ENCODE measurements at regions of chr6 and their contacts with region 1.

Region 1: DNA sequence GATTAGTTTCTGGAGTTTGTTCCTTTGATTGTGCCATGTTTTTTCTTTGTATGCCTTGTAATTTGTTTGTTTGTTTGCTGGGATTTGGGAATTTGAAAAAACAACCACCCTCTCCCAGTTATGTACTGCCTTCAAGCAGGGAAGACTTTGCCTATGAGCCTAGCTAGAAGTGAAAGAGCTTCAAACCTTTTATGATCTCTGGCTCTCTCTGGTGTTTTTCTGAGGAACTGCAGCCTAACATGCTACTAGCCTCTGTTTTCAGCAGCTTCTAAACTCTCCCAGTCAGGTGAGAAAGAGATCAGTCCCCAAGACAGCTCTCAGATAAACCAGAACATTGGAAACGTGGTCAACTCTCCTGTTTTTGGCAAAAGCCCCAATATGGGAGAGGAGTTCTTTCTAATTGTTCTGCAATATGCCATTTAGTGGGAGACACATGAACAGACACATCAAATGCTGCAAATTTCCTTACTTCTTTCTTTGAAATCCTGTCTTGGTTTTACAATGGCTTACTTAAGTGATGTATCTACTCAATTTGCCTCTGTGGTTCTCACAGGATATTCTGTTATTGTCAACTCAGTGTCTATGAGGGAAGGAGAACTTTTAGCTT is 58.9 kb upstream of the SERINC1 start:
- DNase-seq: peak; percentile 51 to 73 (median 56)
- ATAC-seq: peak; percentile 96
- H3K4me3 ChIP-seq: no peak overlapping the region
- H3K27ac ChIP-seq: no peak overlapping the region
- H3K4me1 ChIP-seq: no peaks in the 10 kb centered on the region
- H3K27me3 ChIP-seq: no peaks in the 10 kb centered on the region
- CTCF ChIP-seq: peak; percentile 72 to 86 (median 76)
- EP300 ChIP-seq: no peak
- POLR2A ChIP-seq: no peak
- RAD21 ChIP-seq: peak; percentile 83 to 95

Region 2: DNA sequence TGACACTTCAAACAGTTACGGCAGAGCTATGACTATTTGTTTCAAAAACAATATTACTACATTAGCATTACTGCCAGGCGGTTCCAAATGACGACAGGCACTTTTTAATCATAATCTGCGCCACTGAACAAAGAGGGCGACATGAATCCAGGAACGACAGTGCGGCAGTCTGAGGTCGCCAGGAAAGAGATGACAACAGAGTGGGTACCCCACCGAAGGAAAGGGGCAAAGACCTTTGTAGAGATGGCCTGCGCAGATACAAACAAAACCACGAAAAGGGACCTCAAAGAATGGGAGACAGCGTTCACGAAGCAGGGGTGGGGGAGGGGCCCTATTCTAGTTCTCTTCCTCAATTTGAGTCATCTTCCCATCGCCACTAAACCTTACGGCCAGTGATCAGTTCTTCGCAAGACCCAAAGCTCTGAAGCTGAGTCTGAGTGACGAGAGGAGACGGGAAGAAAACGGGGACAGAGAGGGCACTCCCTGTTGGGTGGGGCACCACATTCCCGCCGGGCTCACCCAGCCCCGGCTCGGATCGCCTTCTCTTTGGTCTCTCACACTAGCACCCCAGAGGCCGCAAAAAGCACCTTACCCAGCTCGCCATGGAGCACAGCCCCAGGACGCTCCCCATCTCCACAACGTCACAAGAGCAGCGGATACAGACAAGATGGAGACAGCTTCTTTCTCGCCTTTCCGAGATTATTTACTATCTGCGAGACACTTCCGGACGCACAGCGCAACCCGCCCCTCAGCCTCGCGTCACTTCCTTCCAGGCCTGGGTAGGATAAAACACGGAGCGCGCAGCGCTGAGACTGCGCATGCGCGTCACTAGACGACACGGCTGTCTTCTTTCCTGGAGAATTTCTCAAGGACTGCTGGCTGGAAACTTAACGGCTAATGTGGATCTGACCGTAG is 59.2 kb before region 1 on chr6 and contains the start of gene SERINC1:
- CTCF ChIA-PET with region 1: interaction called, 4 read pairs
- POLR2A ChIA-PET with region 1: interaction called, 3 read pairs
- in situ Hi-C with region 1: no loop called
- intact Hi-C with region 1: loop called (anchors 1 kb)
- DNase-seq: peak; percentile 91 to 97 (median 92)
- ATAC-seq: peak; percentile 96
- H3K4me3 ChIP-seq: peak within 1 kb of the TSS; percentile 60
- H3K27ac ChIP-seq: peak within 1 kb of the TSS; percentile 87
- H3K4me1 ChIP-seq: peaks cover 0 to 6% of the 10 kb centered on the region in 2 experiments; a peak in 2 of 5 replicates
- H3K27me3 ChIP-seq: no peaks in the 10 kb centered on the region
- CTCF ChIP-seq: no peak
- EP300 ChIP-seq: no peak
- POLR2A ChIP-seq: peak; percentile 92
- RAD21 ChIP-seq: no peak
- polyA plus RNA-seq, gene SERINC1: 33.2 to 37.3 TPM

Region 3: GRCh38 chr6:122491919-122492555 is 38.5 kb before region 1 on chr6:
- CTCF ChIA-PET with region 1: no interaction called
- POLR2A ChIA-PET with region 1: interaction called, 3 read pairs
- in situ Hi-C with region 1: no loop called
- intact Hi-C with region 1: loop called (anchors 1 kb)
- DNase-seq: peak; percentile 58 to 82 (median 64)
- ATAC-seq: peak; percentile 99
- H3K4me3 ChIP-seq: no peak overlapping the region
- H3K27ac ChIP-seq: no peak overlapping the region
- H3K4me1 ChIP-seq: no peaks in the 10 kb centered on the region; a peak in 1 of 5 replicates
- H3K27me3 ChIP-seq: no peaks in the 10 kb centered on the region
- CTCF ChIP-seq: peak; percentile 64 to 77 (median 75)
- EP300 ChIP-seq: no peak
- POLR2A ChIP-seq: no peak
- RAD21 ChIP-seq: peak; percentile 45 to 74; a peak in 3 of 4 replicates

Region 4: GRCh38 chr6:122589115-122589514 is 58.6 kb after region 1 on chr6:
- CTCF ChIA-PET with region 1: no interaction called
- POLR2A ChIA-PET with region 1: no interaction called
- in situ Hi-C with region 1: no loop called
- intact Hi-C with region 1: no loop called
- DNase-seq: no peak
- ATAC-seq: no peak
- H3K4me3 ChIP-seq: no peak overlapping the region
- H3K27ac ChIP-seq: no peak overlapping the region
- H3K4me1 ChIP-seq: no peaks in the 10 kb centered on the region
- H3K27me3 ChIP-seq: no peaks in the 10 kb centered on the region
- CTCF ChIP-seq: no peak
- EP300 ChIP-seq: no peak
- POLR2A ChIP-seq: no peak
- RAD21 ChIP-seq: no peak

Measured in K562 (cell line).